Activated CD4-positive, alpha-beta memory T cell treated with anti-CD3 and anti-CD28 coated beads, Interleukin-2, amount 10 ng/mL, durations not matched to agents 7 days and 5 days (primary cell): ENCODE measurements at regions of chr13 and their contacts with region 1.

Region 1: DNA sequence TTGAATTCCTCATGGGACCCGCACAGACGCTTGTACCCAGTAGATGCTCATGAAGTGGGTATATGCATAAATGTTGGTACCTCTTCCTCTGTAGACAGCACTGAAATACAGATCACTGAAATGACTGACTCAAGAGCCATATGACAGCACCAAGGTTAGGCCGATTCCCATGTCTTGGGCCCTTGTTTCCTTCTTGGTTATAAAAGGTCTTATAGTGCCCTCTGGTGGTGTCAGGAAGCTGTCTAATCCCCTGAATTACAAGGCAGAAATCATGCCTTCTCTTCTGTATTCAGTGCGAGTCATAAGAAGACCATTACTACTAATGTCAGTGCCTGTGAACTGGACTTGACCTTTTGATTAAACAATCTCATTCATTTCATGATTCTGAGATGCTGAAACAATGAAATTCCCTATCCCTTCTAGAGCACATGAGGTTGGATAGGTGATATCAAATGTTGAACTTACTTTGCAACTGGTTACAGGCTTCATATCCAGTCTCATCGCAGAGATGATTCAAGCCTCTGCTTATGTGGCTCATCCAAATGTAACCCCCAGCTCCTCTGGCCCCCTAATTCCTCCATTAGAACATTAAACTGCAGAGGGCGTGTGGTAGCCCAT is 59.7 kb downstream of the SPATA13 start:
- DNase-seq: peak; percentile 58
- H3K4me3 Mint-ChIP-seq: no peak overlapping the region
- H3K27ac Mint-ChIP-seq: no peak overlapping the region
- H3K4me1 Mint-ChIP-seq: peaks cover 45% of the 10 kb centered on the region
- H3K27me3 Mint-ChIP-seq: no peaks in the 10 kb centered on the region

Region 2: GRCh38 chr13:24020375-24020830 is 199.8 kb before region 1 on chr13:
- CTCF ChIA-PET with region 1: interaction called, 45 read pairs
- POLR2A ChIA-PET with region 1: interaction called, 3 read pairs
- DNase-seq: peak; percentile 51
- H3K4me3 Mint-ChIP-seq: no peak overlapping the region
- H3K27ac Mint-ChIP-seq: no peak overlapping the region
- H3K4me1 Mint-ChIP-seq: peaks cover 6% of the 10 kb centered on the region
- H3K27me3 Mint-ChIP-seq: no peaks in the 10 kb centered on the region

Region 3: GRCh38 chr13:24053519-24054251 is 166.5 kb before region 1 on chr13:
- CTCF ChIA-PET with region 1: interaction called, 42 read pairs
- POLR2A ChIA-PET with region 1: interaction called, 4 read pairs
- DNase-seq: peak; percentile 73
- H3K4me3 Mint-ChIP-seq: no peak overlapping the region
- H3K27ac Mint-ChIP-seq: no peak overlapping the region
- H3K4me1 Mint-ChIP-seq: peaks cover 14% of the 10 kb centered on the region
- H3K27me3 Mint-ChIP-seq: peaks cover 10% of the 10 kb centered on the region

Region 4: DNA sequence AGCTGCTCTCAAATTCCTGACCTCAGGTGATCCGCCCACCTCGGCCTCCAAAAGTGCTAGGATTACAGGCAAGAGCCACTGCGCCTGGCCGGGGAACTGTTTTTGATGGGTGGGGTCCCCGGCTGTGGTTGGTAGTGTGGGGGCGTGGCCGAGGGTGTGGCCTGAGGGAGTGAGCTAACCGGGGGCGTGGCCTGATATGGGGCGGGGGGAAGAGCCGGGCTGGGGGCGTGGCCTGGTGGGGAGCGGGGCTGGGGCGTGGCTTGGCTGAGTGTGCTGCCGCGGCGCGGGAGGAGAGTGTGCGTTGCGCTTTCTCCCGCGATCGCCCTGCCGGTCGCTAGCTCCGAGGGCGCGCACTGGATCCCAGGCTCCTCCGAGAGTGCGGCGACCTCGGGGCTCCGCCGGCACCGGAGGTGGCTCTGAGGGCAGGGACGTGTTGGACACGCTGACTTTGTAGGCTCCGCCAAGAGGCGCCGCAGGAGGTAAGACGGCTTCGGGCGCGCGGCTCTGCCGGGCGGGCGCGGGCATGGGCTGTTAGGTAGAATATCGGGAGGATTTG is 59.7 kb before region 1 on chr13 and contains the start of gene SPATA13:
- CTCF ChIA-PET with region 1: interaction called, 10 read pairs
- POLR2A ChIA-PET with region 1: no interaction called
- DNase-seq: peak; percentile 94
- H3K4me3 Mint-ChIP-seq: peak within 1 kb of the TSS; percentile 84
- H3K27ac Mint-ChIP-seq: peak within 1 kb of the TSS; percentile 18
- H3K4me1 Mint-ChIP-seq: peaks cover 25% of the 10 kb centered on the region
- H3K27me3 Mint-ChIP-seq: peaks cover 10% of the 10 kb centered on the region
- total RNA-seq, gene SPATA13: 55.4 to 59.2 TPM